ENCODE measurements at regions of chr9 and their contacts with region 1.

Region 1: GRCh38 chr9:5714501-5715401 is 85.8 kb downstream of the RIC1 start:
- DNase-seq: peak; percentile 60
- H3K4me3 Mint-ChIP-seq: no peak overlapping the region
- H3K27ac Mint-ChIP-seq: peak overlapping the region; percentile 47
- H3K4me1 Mint-ChIP-seq: peaks cover 6% of the 10 kb centered on the region
- H3K27me3 Mint-ChIP-seq: no peaks in the 10 kb centered on the region
- CTCF ChIP-seq: peak; percentile 70

Region 2: DNA sequence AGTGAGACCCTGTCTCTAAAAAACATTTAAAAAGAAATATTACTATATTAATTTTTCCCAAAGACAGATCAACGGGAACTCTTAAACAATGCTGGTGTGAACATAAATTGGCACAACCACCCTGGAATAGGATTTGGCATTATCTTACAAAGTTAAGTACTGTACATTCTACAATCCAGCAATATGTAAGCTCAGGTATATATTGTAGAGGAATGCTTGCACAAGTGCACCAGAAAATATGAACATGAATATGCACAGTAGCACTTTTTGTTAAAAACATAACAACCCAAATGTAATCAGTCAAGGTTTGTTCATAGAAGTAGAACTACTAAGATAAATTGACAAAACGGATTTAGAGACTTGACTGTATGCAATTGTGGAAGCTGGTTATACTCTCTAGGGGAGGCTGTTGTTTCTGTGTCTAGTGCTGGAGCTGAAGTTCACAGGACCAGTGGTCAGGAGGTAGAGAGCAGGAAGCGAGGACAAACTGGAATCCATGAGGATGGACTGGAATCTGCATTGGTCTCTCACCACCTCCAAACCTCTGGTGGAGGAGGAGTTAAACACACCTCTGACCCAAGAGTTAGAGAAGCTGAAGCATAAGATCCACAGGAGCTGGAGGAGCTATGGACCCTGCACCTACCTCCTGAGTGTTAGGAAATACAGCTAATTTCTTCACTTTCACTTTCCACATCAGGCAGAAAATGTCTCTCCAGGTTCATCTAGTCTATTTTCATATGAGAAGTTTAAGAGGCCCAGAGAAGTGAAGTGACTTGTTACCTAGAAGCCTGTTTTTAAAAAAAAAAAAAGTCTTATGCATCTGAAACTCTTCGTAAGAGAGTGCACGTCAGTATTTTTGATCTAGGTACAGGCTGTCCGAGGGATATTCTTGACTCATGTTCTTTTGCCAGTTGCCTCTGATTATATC is 106.2 kb before region 1 on chr9:
- CTCF ChIA-PET with region 1: interaction called, 6 read pairs
- POLR2A ChIA-PET with region 1: interaction called, 7 read pairs
- intact Hi-C with region 1: loop called (anchors 1 kb)
- DNase-seq: peak; percentile 35
- H3K4me3 Mint-ChIP-seq: peak overlapping the region; percentile 57
- H3K27ac Mint-ChIP-seq: peak overlapping the region; percentile 47
- H3K4me1 Mint-ChIP-seq: no peaks in the 10 kb centered on the region
- H3K27me3 Mint-ChIP-seq: no peaks in the 10 kb centered on the region
- CTCF ChIP-seq: no peak

Measured in MCF 10A (cell line).